ENCODE measurements at regions of chr13 and their contacts with region 1.

Region 1: GRCh38 chr13:41649659-41650058 is 192.3 kb downstream of the RGCC start:
- DNase-seq: no peak
- CTCF ChIP-seq: no peak

Region 2: DNA sequence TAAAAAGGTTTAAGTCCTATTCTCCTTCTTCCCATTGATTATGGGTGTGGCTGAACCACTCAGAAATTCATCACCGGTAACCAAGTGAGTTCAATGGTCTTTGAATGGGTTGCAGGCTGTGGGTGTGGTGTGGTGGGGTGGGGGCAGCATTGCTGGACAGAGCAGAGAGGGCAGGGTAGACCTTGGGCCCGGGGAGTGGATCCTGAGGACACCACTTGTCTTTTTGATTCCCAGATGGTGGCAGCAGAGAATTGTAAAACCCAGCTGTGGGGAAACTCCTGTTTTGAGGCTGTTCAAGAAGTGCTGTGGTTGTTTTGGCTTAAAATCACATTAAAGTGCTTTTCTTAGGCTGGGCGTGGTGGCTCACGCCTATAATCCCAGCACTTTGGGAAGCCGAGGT is 238.1 kb before region 1 on chr13:
- in situ Hi-C with region 1: loop called (anchors 25 kb)
- DNase-seq: no peak
- CTCF ChIP-seq: peak; percentile 25

Measured in GM13977 (cell line).